ENCODE measurements at regions of chr6 and their contacts with region 1.

Region 1: GRCh38 chr6:138987640-138988468 is at the start of gene REPS1:
- DNase-seq: peak; percentile 88 to 92 (median 89)
- H3K4me3 ChIP-seq: peak within 1 kb of the TSS; percentile 66 to 89
- H3K4me3 Mint-ChIP-seq: peak within 1 kb of the TSS; percentile 87 to 95 (median 92)
- H3K27ac ChIP-seq: peak within 1 kb of the TSS; percentile 74
- H3K27ac Mint-ChIP-seq: peak within 1 kb of the TSS in 6 of 7 donors; percentile 90 to 96 (median 95)
- H3K4me1 ChIP-seq: peaks cover 47% of the 10 kb centered on the region
- H3K4me1 Mint-ChIP-seq: peaks cover 10 to 18% (median 13%) of the 10 kb centered on the region in 4 donors
- H3K27me3 ChIP-seq: no peaks in the 10 kb centered on the region
- H3K27me3 Mint-ChIP-seq: no peaks in the 10 kb centered on the region
- total RNA-seq, gene REPS1: 61.7 to 69.3 TPM

Region 2: DNA sequence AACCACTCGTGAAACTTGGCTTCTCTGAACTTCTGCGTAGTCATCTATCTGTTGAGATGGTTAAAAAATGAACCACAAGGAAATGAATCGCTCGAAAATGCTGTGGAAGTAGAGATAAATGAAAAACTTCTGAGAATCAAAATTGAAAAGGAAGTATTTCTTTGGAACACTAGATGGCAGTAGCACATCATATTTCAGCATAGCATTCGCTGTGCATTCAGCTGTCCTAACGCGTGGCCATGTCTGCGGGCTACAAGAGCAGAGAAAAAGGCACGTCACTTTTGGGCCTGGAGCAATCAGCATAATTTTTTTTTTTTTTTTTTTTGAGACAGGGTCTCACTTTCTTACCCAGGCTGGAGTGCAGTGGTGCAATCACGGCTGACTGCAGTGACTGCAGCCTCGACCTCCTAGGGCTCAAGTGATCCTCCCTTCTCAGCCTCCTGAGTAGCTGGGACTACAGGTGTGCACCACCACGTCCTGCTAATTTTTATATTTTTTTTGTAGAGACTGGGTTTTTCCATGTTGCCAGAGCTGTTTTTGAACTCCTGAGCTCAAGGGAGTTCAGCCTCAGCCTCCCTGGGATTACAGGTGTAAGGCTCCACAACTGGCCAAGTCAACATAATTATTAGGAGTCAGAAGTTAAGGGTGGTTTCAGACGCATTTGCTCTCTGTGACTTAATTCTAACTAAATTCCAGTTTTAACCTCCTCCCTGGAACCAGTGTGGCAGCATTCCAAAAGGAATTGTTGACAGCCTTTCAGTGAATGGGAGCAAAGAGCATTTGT is 871.8 kb before region 1 on chr6:
- CTCF ChIA-PET with region 1: interaction called, 3 read pairs
- POLR2A ChIA-PET with region 1: no interaction called
- intact Hi-C with region 1: loop called (anchors 5 kb)
- DNase-seq: peak; percentile 53 to 64 (median 62)
- H3K4me3 ChIP-seq: no peak overlapping the region
- H3K4me3 Mint-ChIP-seq: peak overlapping the region in 1 of 8 donors; percentile 20
- H3K27ac ChIP-seq: no peak overlapping the region
- H3K27ac Mint-ChIP-seq: no peak overlapping the region
- H3K4me1 ChIP-seq: no peaks in the 10 kb centered on the region
- H3K4me1 Mint-ChIP-seq: peaks cover 3 to 5% (median 4%) of the 10 kb centered on the region in 4 donors
- H3K27me3 ChIP-seq: no peaks in the 10 kb centered on the region
- H3K27me3 Mint-ChIP-seq: peaks cover 20 to 21% of the 10 kb centered on the region in 2 donors

Region 3: DNA sequence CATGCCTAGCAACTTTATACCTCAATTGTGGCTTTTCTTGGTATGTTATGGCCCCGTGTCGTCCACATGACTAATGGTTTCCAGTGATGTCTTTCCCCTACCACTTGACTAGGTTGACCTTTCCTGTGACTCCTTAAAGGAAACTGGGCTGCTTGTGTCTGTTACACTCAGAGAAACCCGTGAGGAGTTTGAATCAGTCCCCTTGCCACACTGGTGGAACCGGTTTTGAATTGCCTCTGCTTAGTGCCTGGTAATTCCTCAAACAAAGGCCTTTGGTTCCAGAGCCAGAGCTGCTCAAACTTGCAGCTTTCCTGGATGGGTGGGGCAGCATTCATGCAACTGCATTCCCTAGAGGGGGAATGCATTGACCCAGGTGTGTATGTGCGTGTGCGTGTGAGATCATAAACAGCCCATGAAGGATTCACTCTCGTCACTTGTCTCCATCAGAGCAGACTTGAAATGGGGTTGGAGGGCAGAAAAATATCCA is 170.0 kb before region 1 on chr6:
- CTCF ChIA-PET with region 1: interaction called, 17 read pairs
- POLR2A ChIA-PET with region 1: no interaction called
- intact Hi-C with region 1: loop called (anchors 1 kb)
- DNase-seq: no peak
- H3K4me3 ChIP-seq: no peak overlapping the region
- H3K4me3 Mint-ChIP-seq: no peak overlapping the region
- H3K27ac ChIP-seq: no peak overlapping the region
- H3K27ac Mint-ChIP-seq: peak overlapping the region in 1 of 7 donors; percentile 55
- H3K4me1 ChIP-seq: no peaks in the 10 kb centered on the region
- H3K4me1 Mint-ChIP-seq: peaks cover 3 to 10% (median 7%) of the 10 kb centered on the region in 4 donors
- H3K27me3 ChIP-seq: no peaks in the 10 kb centered on the region
- H3K27me3 Mint-ChIP-seq: peaks cover 0 to 2% of the 10 kb centered on the region in 2 donors

Region 4: DNA sequence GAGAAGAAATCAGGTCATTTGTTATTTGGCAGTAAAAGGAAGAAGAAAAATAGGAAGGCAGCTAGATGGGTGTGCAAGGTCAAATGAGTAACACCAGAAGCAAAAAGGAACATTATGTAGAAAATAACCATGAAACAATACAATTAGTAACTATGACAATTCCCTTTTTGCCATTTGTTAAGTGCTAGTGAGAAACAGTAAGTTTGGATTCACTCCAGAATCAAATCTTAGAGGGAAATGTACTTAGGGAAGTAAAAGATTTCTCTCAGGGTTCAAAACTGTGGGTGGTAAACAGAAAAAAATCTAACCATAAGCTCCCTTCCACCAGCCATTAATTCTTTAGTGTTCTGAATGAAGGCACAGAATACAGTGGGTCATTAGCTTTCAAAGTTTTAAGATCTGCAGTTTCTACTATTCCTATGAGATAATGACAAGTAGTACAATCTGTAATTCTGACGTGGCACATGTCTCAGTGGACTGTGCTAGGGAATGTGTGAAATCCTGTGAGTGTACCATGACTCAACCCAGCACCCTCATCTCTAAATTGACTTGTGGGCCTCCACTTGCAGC is 16.9 kb before region 1 on chr6:
- CTCF ChIA-PET with region 1: interaction called, 19 read pairs
- POLR2A ChIA-PET with region 1: interaction called, 5 read pairs
- intact Hi-C with region 1: no loop called
- DNase-seq: no peak
- H3K4me3 ChIP-seq: no peak overlapping the region
- H3K4me3 Mint-ChIP-seq: peak overlapping the region in 3 of 8 donors; percentile 6 to 57 (median 7)
- H3K27ac ChIP-seq: no peak overlapping the region
- H3K27ac Mint-ChIP-seq: peak overlapping the region in 2 of 7 donors; percentile 2 to 11
- H3K4me1 ChIP-seq: peaks cover 74% of the 10 kb centered on the region
- H3K4me1 Mint-ChIP-seq: peaks cover 58 to 89% (median 75%) of the 10 kb centered on the region in 4 donors
- H3K27me3 ChIP-seq: no peaks in the 10 kb centered on the region
- H3K27me3 Mint-ChIP-seq: no peaks in the 10 kb centered on the region

Region 5: GRCh38 chr6:139028658-139029469 is 41.0 kb after region 1 on chr6 and contains the start of gene ABRACL:
- CTCF ChIA-PET with region 1: interaction called, 17 read pairs
- POLR2A ChIA-PET with region 1: interaction called, 27 read pairs
- intact Hi-C with region 1: loop called (anchors 1 kb)
- DNase-seq: peak; percentile 74 to 88 (median 75)
- H3K4me3 ChIP-seq: peak within 1 kb of the TSS; percentile 59 to 97
- H3K4me3 Mint-ChIP-seq: peak within 1 kb of the TSS in 5 of 8 donors; percentile 93 to 98 (median 95)
- H3K27ac ChIP-seq: peak within 1 kb of the TSS; percentile 88
- H3K27ac Mint-ChIP-seq: peak within 1 kb of the TSS; percentile 88 to 98 (median 92)
- H3K4me1 ChIP-seq: peaks cover 46% of the 10 kb centered on the region
- H3K4me1 Mint-ChIP-seq: peaks cover 22 to 34% (median 28%) of the 10 kb centered on the region in 4 donors
- H3K27me3 ChIP-seq: no peaks in the 10 kb centered on the region
- H3K27me3 Mint-ChIP-seq: no peaks in the 10 kb centered on the region
- total RNA-seq, gene ABRACL: 103 to 112 TPM

Region 6: GRCh38 chr6:139134817-139135581 is 147.1 kb after region 1 on chr6 and contains the start of gene HECA:
- CTCF ChIA-PET with region 1: interaction called, 5 read pairs
- POLR2A ChIA-PET with region 1: interaction called, 8 read pairs
- intact Hi-C with region 1: loop called (anchors 2 kb)
- DNase-seq: peak; percentile 98 to 100 (median 99)
- H3K4me3 ChIP-seq: peak within 1 kb of the TSS; percentile 75 to 95
- H3K4me3 Mint-ChIP-seq: peak within 1 kb of the TSS; percentile 90 to 98 (median 95)
- H3K27ac ChIP-seq: peak within 1 kb of the TSS; percentile 97
- H3K27ac Mint-ChIP-seq: peak within 1 kb of the TSS; percentile 98 to 100 (median 99)
- H3K4me1 ChIP-seq: peaks cover 60% of the 10 kb centered on the region
- H3K4me1 Mint-ChIP-seq: peaks cover 48 to 84% (median 57%) of the 10 kb centered on the region in 4 donors
- H3K27me3 ChIP-seq: no peaks in the 10 kb centered on the region
- H3K27me3 Mint-ChIP-seq: no peaks in the 10 kb centered on the region
- total RNA-seq, gene HECA: 154 to 161 TPM

Region 7: DNA sequence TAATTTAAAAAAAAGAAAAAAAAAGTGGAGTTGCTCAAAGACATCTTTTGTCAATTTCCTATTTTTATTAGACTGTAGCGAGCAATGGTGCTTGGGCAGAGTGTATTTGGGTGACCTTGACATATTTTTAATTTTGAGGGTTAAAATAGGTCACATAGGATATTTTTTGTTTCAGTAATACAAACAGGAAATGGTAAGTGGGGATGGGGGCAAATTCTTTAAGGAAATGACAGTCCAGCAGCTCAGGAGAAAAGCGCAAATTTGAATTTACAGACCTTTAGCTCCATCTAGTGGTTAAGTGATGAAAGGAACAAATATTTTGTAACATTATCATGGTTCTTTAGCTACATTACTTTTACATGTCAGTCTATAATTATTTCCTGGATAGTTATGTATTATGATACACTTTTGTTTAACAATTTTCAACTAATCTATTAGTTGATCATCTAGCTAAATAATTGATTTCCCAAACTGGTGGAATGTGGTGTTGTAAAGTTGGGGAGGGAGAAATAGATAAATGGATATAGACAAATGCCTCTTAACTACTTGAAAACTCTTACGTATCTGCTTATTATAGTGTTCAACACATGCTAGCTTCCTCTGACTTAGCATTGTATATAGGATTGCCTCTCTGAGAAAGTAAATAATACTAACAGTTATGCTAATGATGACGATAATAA is 376.6 kb after region 1 on chr6:
- CTCF ChIA-PET with region 1: interaction called, 9 read pairs
- POLR2A ChIA-PET with region 1: interaction called, 5 read pairs
- intact Hi-C with region 1: loop called (anchors 1 kb)
- DNase-seq: peak in 4 of 5 donors; percentile 66 to 74 (median 68)
- H3K4me3 ChIP-seq: no peak overlapping the region
- H3K4me3 Mint-ChIP-seq: peak overlapping the region in 7 of 8 donors; percentile 27 to 64 (median 36)
- H3K27ac ChIP-seq: no peak overlapping the region
- H3K27ac Mint-ChIP-seq: peak overlapping the region in 6 of 7 donors; percentile 2 to 82 (median 62)
- H3K4me1 ChIP-seq: peaks cover 20% of the 10 kb centered on the region
- H3K4me1 Mint-ChIP-seq: peaks cover 28 to 45% (median 33%) of the 10 kb centered on the region in 4 donors
- H3K27me3 ChIP-seq: no peaks in the 10 kb centered on the region
- H3K27me3 Mint-ChIP-seq: no peaks in the 10 kb centered on the region

Measured in CD4-positive, alpha-beta memory T cell (primary cell).